GM10248 (cell line): ENCODE measurements at regions of chr7 and their contacts with region 1.

Region 1: GRCh38 chr7:25093268-25093826 is 31.7 kb downstream of the CYCS start:
- DNase-seq: peak; percentile 82
- CTCF ChIP-seq: peak; percentile 84

Region 2: DNA sequence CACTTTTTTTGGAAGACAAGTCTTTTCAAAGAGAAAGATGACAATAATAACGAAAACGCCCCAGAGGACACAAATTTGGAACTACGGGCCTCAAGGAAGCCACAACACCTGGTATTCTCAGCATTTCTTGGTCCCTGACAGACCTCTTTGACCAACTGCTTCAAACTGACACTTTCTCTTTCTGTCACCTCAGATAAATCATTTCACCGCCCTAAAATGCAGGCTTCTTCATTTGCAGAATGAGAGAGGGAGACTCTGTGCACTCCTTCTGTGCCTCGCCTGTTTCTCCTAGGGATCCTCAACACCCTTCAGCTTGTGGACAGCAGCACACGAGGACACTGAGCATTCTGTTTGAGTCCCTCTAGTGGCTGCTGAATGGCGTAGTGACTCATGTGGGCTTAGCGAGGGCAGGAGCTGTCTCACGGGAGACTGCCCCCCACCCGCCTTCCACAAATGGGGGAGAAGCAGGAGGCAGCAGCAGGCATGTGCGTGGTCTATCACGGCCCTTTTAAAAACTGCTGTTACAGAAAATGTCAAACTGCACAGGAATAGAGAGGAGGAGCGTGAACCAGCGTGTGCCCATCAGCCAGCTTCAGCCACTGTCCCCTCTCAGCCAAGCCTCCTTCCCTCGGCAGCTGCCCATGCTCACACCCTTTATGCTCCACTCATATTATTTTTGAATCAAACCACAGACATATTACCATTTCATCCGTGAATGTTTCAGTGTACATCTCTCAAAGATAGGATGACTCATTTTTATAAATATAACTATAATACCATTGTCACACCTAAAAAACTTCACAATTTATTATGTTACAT is 377.5 kb before region 1 on chr7:
- CTCF ChIA-PET with region 1: interaction called, 14 read pairs
- POLR2A ChIA-PET with region 1: no interaction called
- DNase-seq: peak; percentile 68
- CTCF ChIP-seq: peak; percentile 67

Region 3: GRCh38 chr7:24812310-24812945 is 280.9 kb before region 1 on chr7:
- CTCF ChIA-PET with region 1: interaction called, 312 read pairs
- POLR2A ChIA-PET with region 1: no interaction called
- DNase-seq: peak; percentile 58
- CTCF ChIP-seq: peak; percentile 81

Region 4: DNA sequence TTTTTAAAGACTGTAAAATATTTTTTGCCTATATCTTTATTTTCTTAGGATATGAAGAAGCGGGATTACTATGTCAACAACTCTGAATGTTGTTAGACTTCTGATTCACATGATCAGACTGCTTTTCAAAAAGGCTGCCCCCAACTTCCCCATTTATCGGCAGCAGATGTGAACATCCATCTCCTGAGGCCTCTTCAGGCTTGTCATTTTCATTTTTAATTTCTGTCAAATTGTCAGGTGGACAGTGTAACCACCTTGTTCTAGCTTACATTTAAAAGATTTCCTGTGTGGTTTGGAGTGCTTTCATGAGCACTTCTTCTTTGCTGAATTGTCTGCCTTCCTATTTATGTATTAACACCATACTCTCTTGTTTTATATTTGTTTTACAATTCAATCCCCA is 257.3 kb before region 1 on chr7:
- CTCF ChIA-PET with region 1: interaction called, 19 read pairs
- POLR2A ChIA-PET with region 1: no interaction called
- DNase-seq: peak; percentile 42
- CTCF ChIP-seq: no peak

Region 5: DNA sequence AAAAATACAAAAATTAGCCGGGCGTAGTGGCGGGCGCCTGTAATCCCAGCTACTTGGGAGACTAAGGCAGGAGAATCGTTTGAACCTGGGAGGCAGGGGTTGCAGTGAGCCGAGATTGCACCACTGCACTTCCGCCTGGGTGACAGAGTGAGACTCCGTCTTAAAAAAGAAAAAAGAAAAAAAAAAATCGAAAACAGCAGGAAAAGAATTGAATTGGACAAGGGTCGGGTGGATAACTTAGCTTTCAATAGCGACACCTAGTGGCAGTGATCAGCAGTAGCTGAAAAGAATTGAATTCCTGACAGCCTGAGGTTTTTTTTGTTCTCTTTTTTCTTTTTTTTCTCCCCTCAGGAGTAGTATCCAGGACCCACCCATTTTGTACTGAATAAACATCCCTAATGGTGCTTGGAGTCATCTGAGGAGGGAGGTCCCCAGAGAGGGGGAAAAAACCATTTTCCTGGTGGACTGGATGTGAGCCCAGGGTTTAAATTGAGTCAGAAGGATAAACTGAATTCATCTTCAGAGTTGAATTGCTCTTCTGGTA is 23.4 kb before region 1 on chr7:
- CTCF ChIA-PET with region 1: interaction called, 188 read pairs
- POLR2A ChIA-PET with region 1: no interaction called
- DNase-seq: peak; percentile 81
- CTCF ChIP-seq: peak; percentile 77

Region 6: GRCh38 chr7:25125137-25125946 is 32.0 kb after region 1 on chr7 and contains the start of gene CYCS:
- CTCF ChIA-PET with region 1: interaction called, 24 read pairs
- POLR2A ChIA-PET with region 1: no interaction called
- DNase-seq: peak; percentile 93
- CTCF ChIP-seq: no peak

Region 7: GRCh38 chr7:25481891-25482290 is 388.5 kb after region 1 on chr7:
- CTCF ChIA-PET with region 1: no interaction called
- POLR2A ChIA-PET with region 1: no interaction called
- DNase-seq: no peak
- CTCF ChIP-seq: no peak

Region 8: GRCh38 chr7:25877802-25878789 is 784.7 kb after region 1 on chr7:
- CTCF ChIA-PET with region 1: no interaction called
- POLR2A ChIA-PET with region 1: no interaction called
- DNase-seq: peak; percentile 47
- CTCF ChIP-seq: no peak